ENCODE measurements at regions of chr3 and their contacts with region 1.

Region 1: GRCh38 chr3:23728601-23729117 is 77.1 kb upstream of the UBE2E1 start:
- DNase-seq: peak; percentile 78 to 80
- H3K4me3 ChIP-seq: no peak overlapping the region
- H3K4me3 Mint-ChIP-seq: peak overlapping the region; percentile 54
- H3K27ac Mint-ChIP-seq: peak overlapping the region; percentile 45
- H3K4me1 ChIP-seq: peaks cover 22% of the 10 kb centered on the region
- H3K4me1 Mint-ChIP-seq: peaks cover 8% of the 10 kb centered on the region
- H3K27me3 ChIP-seq: no peaks in the 10 kb centered on the region
- H3K27me3 Mint-ChIP-seq: no peaks in the 10 kb centered on the region
- CTCF ChIP-seq: no peak

Region 2: GRCh38 chr3:23712656-23713559 is 15.8 kb before region 1 on chr3:
- CTCF ChIA-PET with region 1: interaction called, 3 read pairs
- POLR2A ChIA-PET with region 1: interaction called, 3 read pairs
- intact Hi-C with region 1: loop called (anchors 2 kb)
- DNase-seq: peak; percentile 60 to 68
- H3K4me3 ChIP-seq: no peak overlapping the region
- H3K4me3 Mint-ChIP-seq: no peak overlapping the region
- H3K27ac Mint-ChIP-seq: no peak overlapping the region
- H3K4me1 ChIP-seq: peaks cover 5% of the 10 kb centered on the region; the same call in 1 of the 2 replicates
- H3K4me1 Mint-ChIP-seq: peaks cover 17% of the 10 kb centered on the region
- H3K27me3 ChIP-seq: no peaks in the 10 kb centered on the region
- H3K27me3 Mint-ChIP-seq: no peaks in the 10 kb centered on the region
- CTCF ChIP-seq: peak in 1 of 2 experiments; percentile 41

Region 3: DNA sequence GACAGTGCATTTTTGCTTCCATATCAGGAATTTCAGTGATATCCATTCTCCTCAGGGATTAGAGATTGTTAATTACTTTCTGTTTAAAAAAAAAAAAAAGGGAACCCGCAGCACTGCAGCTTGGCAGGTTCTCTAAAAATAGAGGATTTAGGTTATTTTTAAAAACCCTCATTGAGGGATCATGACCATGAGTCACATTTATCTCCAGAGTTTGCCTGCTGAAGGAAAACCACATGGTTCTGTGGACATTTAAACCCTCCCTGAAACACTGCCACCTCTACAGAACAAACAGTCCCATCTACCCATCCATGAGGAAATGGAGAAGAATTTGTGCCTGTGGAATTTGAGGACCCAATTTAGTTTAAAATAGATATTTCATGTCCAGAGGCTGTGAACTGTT is 10.9 kb after region 1 on chr3:
- CTCF ChIA-PET with region 1: no interaction called
- POLR2A ChIA-PET with region 1: no interaction called
- intact Hi-C with region 1: loop called (anchors 1 kb)
- DNase-seq: no peak
- H3K4me3 ChIP-seq: no peak overlapping the region
- H3K4me3 Mint-ChIP-seq: no peak overlapping the region
- H3K27ac Mint-ChIP-seq: peak overlapping the region; percentile 55
- H3K4me1 ChIP-seq: peaks cover 37% of the 10 kb centered on the region
- H3K4me1 Mint-ChIP-seq: peaks cover 34% of the 10 kb centered on the region
- H3K27me3 ChIP-seq: no peaks in the 10 kb centered on the region
- H3K27me3 Mint-ChIP-seq: no peaks in the 10 kb centered on the region
- CTCF ChIP-seq: no peak

Region 4: DNA sequence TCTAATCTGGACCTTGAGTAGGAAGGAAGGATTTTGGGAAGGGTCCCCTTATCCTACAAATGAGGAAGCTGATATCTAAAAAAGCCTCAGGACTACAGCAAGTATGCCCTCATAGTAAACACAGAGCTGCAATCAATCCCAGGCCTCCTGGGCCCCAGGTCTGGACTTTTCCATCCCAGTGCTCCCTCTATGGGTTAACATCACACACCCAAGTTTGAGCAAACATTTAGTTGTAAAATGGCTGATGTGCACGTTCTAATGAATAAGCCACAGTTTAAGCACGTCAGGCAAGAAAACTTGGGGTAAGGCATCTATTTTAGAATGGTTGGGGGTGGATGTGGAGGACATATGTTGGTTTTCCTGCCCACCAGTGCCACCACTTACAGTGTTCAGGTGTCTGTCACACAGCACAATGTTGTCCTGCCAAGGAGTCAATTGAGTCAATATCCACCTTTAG is 32.8 kb after region 1 on chr3:
- CTCF ChIA-PET with region 1: interaction called, 3 read pairs
- POLR2A ChIA-PET with region 1: no interaction called
- intact Hi-C with region 1: loop called (anchors 2 kb)
- DNase-seq: peak; percentile 56 to 63
- H3K4me3 ChIP-seq: no peak overlapping the region
- H3K4me3 Mint-ChIP-seq: no peak overlapping the region
- H3K27ac Mint-ChIP-seq: no peak overlapping the region
- H3K4me1 ChIP-seq: no peaks in the 10 kb centered on the region
- H3K4me1 Mint-ChIP-seq: no peaks in the 10 kb centered on the region
- H3K27me3 ChIP-seq: no peaks in the 10 kb centered on the region
- H3K27me3 Mint-ChIP-seq: no peaks in the 10 kb centered on the region
- CTCF ChIP-seq: peak in 1 of 2 experiments; percentile 55

Region 5: DNA sequence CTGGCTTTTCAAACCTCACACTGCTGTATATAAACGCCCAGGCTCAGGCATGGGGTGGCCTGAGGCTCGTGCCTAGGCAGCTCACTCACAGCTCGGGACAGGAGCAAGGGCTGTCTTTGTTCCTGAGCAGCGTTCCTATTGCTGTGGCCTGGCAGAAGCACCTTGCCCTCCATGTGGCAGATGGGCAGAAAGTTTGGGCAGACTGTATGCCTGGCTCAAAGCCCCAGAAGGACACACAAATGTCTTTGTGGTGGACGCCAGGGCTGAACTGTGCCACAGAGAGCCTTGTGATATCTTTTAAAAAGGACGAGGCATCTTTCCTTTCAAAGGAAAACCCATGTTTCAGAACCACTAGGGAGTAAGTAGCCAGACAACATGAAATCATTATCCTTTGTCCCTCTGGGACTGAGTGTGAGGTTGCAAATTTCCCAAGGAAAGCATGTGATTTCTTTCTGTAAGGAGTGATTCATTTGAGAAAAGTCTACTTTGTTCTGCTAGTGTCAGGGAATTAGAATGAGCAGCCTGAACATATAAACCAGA is 47.8 kb after region 1 on chr3:
- CTCF ChIA-PET with region 1: no interaction called
- POLR2A ChIA-PET with region 1: no interaction called
- intact Hi-C with region 1: no loop called
- DNase-seq: no peak
- H3K4me3 ChIP-seq: no peak overlapping the region
- H3K4me3 Mint-ChIP-seq: no peak overlapping the region
- H3K27ac Mint-ChIP-seq: no peak overlapping the region
- H3K4me1 ChIP-seq: no peaks in the 10 kb centered on the region
- H3K4me1 Mint-ChIP-seq: no peaks in the 10 kb centered on the region
- H3K27me3 ChIP-seq: no peaks in the 10 kb centered on the region
- H3K27me3 Mint-ChIP-seq: no peaks in the 10 kb centered on the region
- CTCF ChIP-seq: no peak

Region 6: GRCh38 chr3:23805633-23806533 is 77.2 kb after region 1 on chr3 and contains the start of gene UBE2E1:
- CTCF ChIA-PET with region 1: no interaction called
- POLR2A ChIA-PET with region 1: no interaction called
- intact Hi-C with region 1: loop called (anchors 1 kb)
- DNase-seq: peak; percentile 61 to 62
- H3K4me3 ChIP-seq: peak within 1 kb of the TSS; percentile 76
- H3K4me3 Mint-ChIP-seq: peak within 1 kb of the TSS; percentile 84
- H3K27ac Mint-ChIP-seq: peak within 1 kb of the TSS; percentile 95
- H3K4me1 ChIP-seq: peaks cover 28% of the 10 kb centered on the region
- H3K4me1 Mint-ChIP-seq: peaks cover 38% of the 10 kb centered on the region
- H3K27me3 ChIP-seq: no peaks in the 10 kb centered on the region
- H3K27me3 Mint-ChIP-seq: no peaks in the 10 kb centered on the region
- CTCF ChIP-seq: peak in 1 of 2 experiments; percentile 5
- total RNA-seq, gene UBE2E1: 98.6 and 104 TPM in 2 replicates

Region 7: DNA sequence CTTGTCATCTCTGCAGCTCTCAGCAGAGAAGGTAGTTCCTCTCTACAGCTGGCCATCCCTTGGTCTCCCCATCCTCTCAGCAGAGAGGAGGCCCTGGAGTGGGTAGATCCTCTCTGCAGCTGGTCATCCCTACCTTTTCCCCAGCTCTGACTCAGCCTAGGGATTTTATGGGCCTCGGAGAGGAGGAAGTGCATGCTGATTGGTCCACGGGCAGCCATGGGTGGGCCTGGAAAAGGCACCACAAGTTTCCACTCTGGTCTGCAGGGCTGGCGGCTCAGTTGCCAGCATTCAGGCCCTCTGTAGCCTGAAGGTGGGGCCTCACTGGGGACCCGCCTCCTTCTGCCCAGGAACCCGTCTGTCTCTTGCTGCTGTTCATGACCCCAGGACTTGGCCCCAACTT is 253.3 kb after region 1 on chr3:
- CTCF ChIA-PET with region 1: no interaction called
- POLR2A ChIA-PET with region 1: no interaction called
- intact Hi-C with region 1: no loop called
- DNase-seq: no peak
- H3K4me3 ChIP-seq: no peak overlapping the region
- H3K4me3 Mint-ChIP-seq: no peak overlapping the region
- H3K27ac Mint-ChIP-seq: no peak overlapping the region
- H3K4me1 ChIP-seq: no peaks in the 10 kb centered on the region
- H3K4me1 Mint-ChIP-seq: no peaks in the 10 kb centered on the region
- H3K27me3 ChIP-seq: no peaks in the 10 kb centered on the region
- H3K27me3 Mint-ChIP-seq: no peaks in the 10 kb centered on the region
- CTCF ChIP-seq: no peak